Gastrocnemius medialis (tissue), 4 donors: ENCODE measurements at regions of chr15 and their contacts with region 1.

Region 1: GRCh38 chr15:83653639-83654378 is at the start of gene ADAMTSL3:
- DNase-seq: peak in 1 of 2 donors; percentile 33
- ATAC-seq: peak; percentile 57 to 61
- H3K4me3 ChIP-seq: peak within 1 kb of the TSS; percentile 49 to 57 (median 50)
- H3K27ac ChIP-seq: peak within 1 kb of the TSS; percentile 45 to 62 (median 56)
- H3K4me1 ChIP-seq: no peaks in the 10 kb centered on the region
- H3K27me3 ChIP-seq: peaks cover 9 to 26% (median 24%) of the 10 kb centered on the region in 3 donors
- CTCF ChIP-seq: no peak
- POLR2A ChIP-seq: no peak
- total RNA-seq, gene ADAMTSL3: 0.66 to 2.9 (median 0.76) TPM

Region 2: GRCh38 chr15:83673385-83673784 is 19.6 kb after region 1 on chr15:
- in situ Hi-C with region 1: no loop called
- intact Hi-C with region 1: no loop called
- DNase-seq: no peak
- ATAC-seq: no peak
- H3K4me3 ChIP-seq: no peak overlapping the region
- H3K27ac ChIP-seq: no peak overlapping the region
- H3K4me1 ChIP-seq: no peaks in the 10 kb centered on the region
- H3K27me3 ChIP-seq: no peaks in the 10 kb centered on the region
- CTCF ChIP-seq: no peak
- POLR2A ChIP-seq: no peak

Region 3: GRCh38 chr15:83698294-83698693 is 44.5 kb after region 1 on chr15:
- in situ Hi-C with region 1: no loop called
- intact Hi-C with region 1: no loop called
- DNase-seq: peak; percentile 19 to 57
- ATAC-seq: peak; percentile 65 to 74
- H3K4me3 ChIP-seq: no peak overlapping the region
- H3K27ac ChIP-seq: peak overlapping the region in 1 of 4 donors; percentile 34
- H3K4me1 ChIP-seq: peaks cover 0 to 3% of the 10 kb centered on the region in 2 donors
- H3K27me3 ChIP-seq: no peaks in the 10 kb centered on the region
- CTCF ChIP-seq: no peak
- POLR2A ChIP-seq: no peak

Region 4: GRCh38 chr15:83747050-83747717 is 93.4 kb after region 1 on chr15:
- in situ Hi-C with region 1: no loop called
- intact Hi-C with region 1: loop called (anchors 10 kb)
- DNase-seq: peak; percentile 12 to 43
- ATAC-seq: peak; percentile 80
- H3K4me3 ChIP-seq: peak overlapping the region in 1 of 4 donors; percentile 24
- H3K27ac ChIP-seq: peak overlapping the region in 3 of 4 donors; percentile 27 to 50 (median 49)
- H3K4me1 ChIP-seq: no peaks in the 10 kb centered on the region
- H3K27me3 ChIP-seq: no peaks in the 10 kb centered on the region
- CTCF ChIP-seq: peak in 1 of 5 experiments; percentile 37
- POLR2A ChIP-seq: no peak